OCI-LY7 (cell line): ENCODE measurements at regions of chr16 and their contacts with region 1.

Region 1: DNA sequence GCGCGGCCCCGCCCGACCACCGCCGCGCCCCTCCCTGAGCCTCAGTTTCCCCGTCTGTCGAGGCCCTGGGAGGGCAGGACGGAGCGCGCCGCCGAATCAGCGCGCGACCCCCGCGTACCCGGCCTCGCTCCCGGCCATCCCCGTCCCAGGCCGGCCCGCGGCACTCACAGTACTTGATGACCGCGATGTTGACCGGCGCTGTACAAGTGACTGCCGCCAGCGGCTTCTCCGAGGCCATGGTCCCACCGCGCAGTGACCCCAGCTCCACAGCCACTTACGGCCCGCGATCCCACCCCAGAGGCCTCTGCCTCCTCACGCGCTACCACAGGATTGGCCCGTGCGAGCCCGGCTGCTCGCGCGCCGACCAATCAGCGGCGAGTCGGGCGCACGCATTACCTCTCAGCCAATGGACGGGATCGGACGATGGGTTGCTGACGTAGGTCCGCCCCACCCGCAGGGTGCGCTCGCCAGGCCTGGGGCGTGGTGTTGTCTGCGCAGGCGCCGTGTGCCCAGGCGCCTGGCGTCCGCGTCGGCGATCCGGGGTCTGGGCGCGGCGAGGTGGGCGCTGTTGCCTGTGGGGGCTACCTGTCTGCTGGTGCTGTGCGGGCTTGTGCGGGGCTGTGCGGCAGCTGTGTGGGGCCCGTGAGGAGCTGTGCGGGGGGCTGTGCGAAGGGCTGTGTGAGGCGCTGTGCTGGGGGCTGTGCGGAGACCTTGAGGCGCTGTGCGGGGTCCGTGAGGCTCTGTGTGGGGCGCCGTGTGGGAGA is at the start of gene MVD:
- DNase-seq: peak; percentile 99
- H3K4me3 ChIP-seq: peak within 1 kb of the TSS; percentile 86
- H3K27ac ChIP-seq: peak within 1 kb of the TSS; percentile 88
- H3K4me1 ChIP-seq: peaks cover 31% of the 10 kb centered on the region
- CTCF ChIP-seq: 0 out of 2 replicates have a peak, but pooled peaks have one; percentile 22
- total RNA-seq, gene MVD: 65.6 and 74.4 TPM in 2 replicates

Region 2: DNA sequence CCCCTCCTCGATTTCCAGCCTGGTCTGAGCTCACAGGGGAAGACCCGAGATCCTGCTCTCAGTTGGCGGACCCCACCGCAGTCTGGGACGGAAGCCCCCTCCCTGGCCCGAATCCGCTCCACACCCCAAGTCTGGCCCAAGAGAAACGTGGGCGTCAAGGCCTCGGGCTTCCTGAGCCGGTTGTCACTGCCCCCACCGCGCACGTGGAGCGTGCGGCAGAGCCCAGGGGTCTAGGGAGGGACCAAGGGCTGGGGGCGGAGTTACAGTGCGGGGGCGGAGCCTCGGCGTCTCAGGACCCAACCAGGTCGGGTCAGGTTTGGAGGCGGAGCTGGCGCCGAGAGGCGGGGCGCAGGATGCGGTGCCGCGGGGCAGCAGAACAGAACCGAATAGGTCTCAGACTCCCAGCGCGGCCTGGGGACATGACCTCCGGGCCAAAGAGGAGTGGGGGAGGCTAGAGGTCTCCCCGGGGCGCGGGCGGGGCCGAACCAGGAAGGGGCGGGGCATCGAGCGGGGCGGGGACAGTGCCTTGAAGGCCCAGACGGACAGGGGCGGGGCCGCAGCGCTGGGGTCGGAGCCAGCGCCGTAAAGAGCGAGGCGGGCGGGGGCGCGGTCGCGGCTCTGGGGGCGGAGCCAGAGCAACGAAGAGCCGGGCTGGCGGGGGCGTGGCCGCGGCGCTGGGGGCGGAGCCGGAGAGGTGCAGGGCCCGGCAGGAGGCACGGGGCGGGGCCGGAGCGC is 210.4 kb before region 1 on chr16:
- CTCF ChIA-PET with region 1: no interaction called
- POLR2A ChIA-PET with region 1: no interaction called
- intact Hi-C with region 1: loop called (anchors 10 kb)
- DNase-seq: peak; percentile 96
- H3K4me3 ChIP-seq: peak overlapping the region; percentile 68
- H3K27ac ChIP-seq: peak overlapping the region; percentile 42
- H3K4me1 ChIP-seq: peaks cover 56% of the 10 kb centered on the region
- CTCF ChIP-seq: no peak

Region 3: GRCh38 chr16:88650749-88651275 is 12.2 kb before region 1 on chr16 and contains the start of gene CYBA:
- CTCF ChIA-PET with region 1: no interaction called
- POLR2A ChIA-PET with region 1: interaction called, 3 read pairs
- intact Hi-C with region 1: loop called (anchors 1 kb)
- DNase-seq: peak; percentile 88
- H3K4me3 ChIP-seq: peak within 1 kb of the TSS; percentile 90
- H3K27ac ChIP-seq: peak within 1 kb of the TSS; percentile 94
- H3K4me1 ChIP-seq: peaks cover 36% of the 10 kb centered on the region
- CTCF ChIP-seq: no peak
- total RNA-seq, gene CYBA: 601 and 647 TPM in 2 replicates

Region 4: DNA sequence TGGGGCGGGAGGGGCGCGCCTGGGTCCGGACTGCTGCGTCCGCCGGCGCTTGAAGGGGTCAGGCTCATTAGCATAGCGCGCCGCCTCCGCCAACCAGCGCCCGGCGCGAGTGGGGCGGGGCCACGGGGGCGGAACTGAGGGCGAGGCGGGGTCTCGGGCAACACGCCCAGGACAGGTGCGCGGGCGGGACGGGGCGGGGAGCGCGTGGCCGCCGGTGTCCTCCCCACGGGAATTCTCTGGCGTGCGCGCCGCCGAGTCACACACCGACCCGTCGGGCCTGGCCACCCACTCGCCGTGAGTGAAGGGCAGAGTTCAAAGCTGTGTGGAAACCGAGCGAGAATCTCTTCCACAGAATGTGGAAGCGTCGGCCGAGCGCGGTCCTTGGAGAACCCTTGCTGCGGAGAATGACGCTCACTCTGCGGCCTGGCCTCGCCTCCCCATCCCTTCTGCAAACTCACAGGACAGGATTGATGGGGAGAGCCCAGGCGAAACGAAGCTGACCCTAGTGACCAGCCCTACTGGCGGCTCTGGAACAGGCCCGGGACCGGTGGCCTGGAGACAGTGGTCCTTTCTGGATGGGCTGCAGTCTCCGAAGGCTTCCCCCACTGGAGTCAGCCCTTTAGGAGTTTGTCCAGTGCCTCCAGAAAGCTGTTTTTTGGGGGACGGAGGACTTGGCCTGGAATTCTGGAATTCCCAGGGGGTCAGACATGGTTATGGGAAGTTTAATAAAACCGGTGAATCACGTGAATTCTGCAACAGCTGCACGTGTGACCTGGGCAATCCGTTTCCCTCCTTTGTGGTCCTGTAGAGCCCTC is 23.6 kb after region 1 on chr16 and contains the start of gene SNAI3:
- CTCF ChIA-PET with region 1: interaction called, 3 read pairs
- POLR2A ChIA-PET with region 1: interaction called, 11 read pairs
- intact Hi-C with region 1: loop called (anchors 1 kb)
- DNase-seq: peak; percentile 89
- H3K4me3 ChIP-seq: peak within 1 kb of the TSS; percentile 77
- H3K27ac ChIP-seq: peak within 1 kb of the TSS; percentile 0
- H3K4me1 ChIP-seq: peaks cover 43% of the 10 kb centered on the region
- CTCF ChIP-seq: no peak
- total RNA-seq, gene SNAI3: 2.4 and 3.1 TPM in 2 replicates

Region 5: GRCh38 chr16:88785106-88785924 is 122.3 kb after region 1 on chr16 and contains the start of gene PIEZO1:
- CTCF ChIA-PET with region 1: no interaction called
- POLR2A ChIA-PET with region 1: no interaction called
- intact Hi-C with region 1: loop called (anchors 5 kb)
- DNase-seq: peak; percentile 82
- H3K4me3 ChIP-seq: peak within 1 kb of the TSS; percentile 83
- H3K27ac ChIP-seq: peak within 1 kb of the TSS; percentile 57
- H3K4me1 ChIP-seq: peaks cover 51% of the 10 kb centered on the region
- CTCF ChIP-seq: peak; percentile 82
- total RNA-seq, gene PIEZO1: 123 and 144 TPM in 2 replicates

Region 6: DNA sequence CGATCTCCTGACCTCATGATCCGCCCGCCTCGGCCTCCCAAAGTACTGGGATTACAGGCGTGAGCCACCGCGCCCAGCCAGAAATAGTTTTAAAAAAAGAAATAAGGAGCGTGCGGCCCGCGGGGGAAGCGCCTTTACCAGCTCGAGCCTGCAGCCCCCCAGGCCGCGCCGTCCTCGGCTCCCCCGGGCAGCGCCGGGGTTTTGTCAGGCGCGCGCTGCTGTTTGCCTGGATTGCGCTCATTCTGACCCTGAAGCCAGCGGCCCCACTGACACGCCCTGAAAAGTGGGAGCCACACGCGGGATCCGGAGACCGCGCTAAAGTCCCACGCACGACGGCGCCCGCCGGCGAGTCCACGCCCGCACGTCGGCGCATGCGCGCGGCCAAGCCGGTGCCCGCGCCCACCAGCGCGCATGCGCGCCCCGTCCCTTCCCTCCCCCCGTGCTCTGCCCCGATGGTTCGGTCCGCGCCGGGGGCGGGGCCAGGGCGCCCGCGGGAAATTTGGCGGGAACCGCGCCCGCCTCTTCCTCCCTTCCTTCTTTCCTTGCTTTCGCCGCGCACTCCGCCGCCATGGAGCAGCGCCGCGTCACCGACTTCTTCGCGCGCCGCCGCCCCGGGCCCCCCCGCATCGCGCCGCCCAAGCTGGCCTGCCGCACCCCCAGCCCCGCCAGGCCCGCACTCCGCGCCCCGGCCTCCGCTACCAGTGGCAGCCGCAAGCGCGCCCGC is 140.4 kb after region 1 on chr16 and contains the start of gene CDT1:
- CTCF ChIA-PET with region 1: no interaction called
- POLR2A ChIA-PET with region 1: no interaction called
- intact Hi-C with region 1: loop called (anchors 5 kb)
- DNase-seq: peak; percentile 89
- H3K4me3 ChIP-seq: peak within 1 kb of the TSS; percentile 88
- H3K27ac ChIP-seq: peak within 1 kb of the TSS; percentile 97
- H3K4me1 ChIP-seq: peaks cover 55% of the 10 kb centered on the region
- CTCF ChIP-seq: no peak
- total RNA-seq, gene CDT1: 82.7 and 90.2 TPM in 2 replicates

Region 7: DNA sequence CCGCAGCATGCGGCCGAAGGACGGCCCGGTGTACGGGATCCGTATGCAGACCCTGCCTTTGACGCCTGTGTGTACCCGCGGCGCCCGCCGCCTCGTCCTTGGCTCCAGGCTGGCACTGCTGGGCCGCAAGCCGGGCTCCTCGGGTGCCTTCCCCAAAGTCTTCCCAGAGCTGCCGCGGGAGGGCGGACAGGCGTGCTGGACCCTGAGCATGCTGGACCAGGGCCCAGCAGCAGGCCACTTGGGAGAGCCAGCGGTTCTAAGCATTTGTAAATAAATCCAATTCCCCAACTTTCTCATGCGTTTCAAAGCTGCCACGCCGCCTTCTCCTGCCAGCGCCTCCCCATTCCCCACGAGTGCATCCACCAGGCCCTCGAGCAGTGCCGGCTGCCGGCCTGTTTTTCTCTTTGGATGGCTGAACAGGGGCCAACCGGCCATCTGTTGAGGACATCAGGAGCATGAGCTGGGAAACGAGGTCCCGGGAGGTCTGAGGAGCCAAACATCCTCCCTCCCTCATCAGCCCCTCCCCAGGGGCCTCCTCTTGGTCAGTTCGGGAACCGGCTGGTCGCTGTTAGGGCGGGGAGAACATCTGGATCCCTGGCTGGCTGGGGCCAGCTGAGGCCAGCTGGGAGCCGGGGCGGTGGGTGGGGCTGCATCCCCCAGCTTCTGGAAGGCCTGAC is 224.0 kb after region 1 on chr16:
- CTCF ChIA-PET with region 1: no interaction called
- POLR2A ChIA-PET with region 1: no interaction called
- intact Hi-C with region 1: no loop called
- DNase-seq: no peak
- H3K4me3 ChIP-seq: no peak overlapping the region
- H3K27ac ChIP-seq: no peak overlapping the region
- H3K4me1 ChIP-seq: no peaks in the 10 kb centered on the region
- CTCF ChIP-seq: no peak